ENCODE measurements at regions of chr3 and their contacts with region 1.

Region 1: GRCh38 chr3:58630076-58630709 is 36.4 kb downstream of the FAM3D start:
- DNase-seq: peak; percentile 81
- H3K4me3 Mint-ChIP-seq: no peak overlapping the region
- H3K27ac Mint-ChIP-seq: no peak overlapping the region
- H3K4me1 Mint-ChIP-seq: no peaks in the 10 kb centered on the region
- H3K27me3 Mint-ChIP-seq: no peaks in the 10 kb centered on the region

Region 2: DNA sequence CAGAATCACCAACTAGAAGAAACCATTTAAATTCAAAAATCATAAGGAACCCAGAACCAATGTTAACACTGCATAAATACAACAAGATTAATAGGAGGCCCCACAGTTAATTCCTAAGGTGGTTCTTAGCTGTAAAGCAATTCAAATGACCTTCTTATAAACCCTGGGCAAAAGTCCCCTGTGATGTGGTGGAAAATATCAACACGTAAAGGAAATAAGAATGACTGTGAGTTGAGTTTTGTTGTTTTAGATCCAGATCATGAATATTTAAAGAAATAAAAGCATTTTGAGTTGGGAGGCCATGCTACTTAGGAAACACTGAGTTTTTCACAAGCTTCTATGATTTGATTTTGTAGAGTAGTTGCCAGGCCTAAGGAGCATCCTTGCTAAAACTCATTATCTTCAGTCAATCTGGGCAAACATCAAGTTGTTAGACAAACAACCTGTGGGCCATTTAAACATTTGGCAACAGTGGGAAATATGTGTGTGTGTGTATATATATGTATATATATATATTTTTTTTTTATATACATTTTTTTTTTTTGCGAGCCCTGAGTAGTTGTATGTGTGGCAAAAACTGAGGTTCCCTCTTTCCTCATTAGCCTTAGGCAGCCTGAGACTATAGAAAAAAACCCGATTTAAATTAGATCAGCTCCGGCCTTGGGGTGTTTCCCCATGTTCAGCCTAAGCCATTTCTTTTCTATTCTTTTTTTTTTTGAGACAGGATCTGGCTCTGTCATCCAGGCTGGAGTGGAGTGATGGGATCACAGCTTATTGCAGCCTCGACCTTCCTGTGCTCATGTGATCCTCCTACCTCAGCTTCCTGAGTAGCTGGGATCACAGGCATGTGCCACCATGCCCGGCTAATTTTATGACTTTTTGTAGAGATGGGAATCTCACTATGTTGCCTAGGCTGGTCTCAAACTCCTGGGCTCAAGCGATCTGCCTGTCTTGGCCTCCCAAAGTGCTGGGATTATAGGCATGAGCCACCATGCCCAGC is 305.5 kb before region 1 on chr3:
- CTCF ChIA-PET with region 1: no interaction called
- intact Hi-C with region 1: loop called (anchors 1 kb)
- DNase-seq: peak; percentile 21
- H3K4me3 Mint-ChIP-seq: peak overlapping the region; percentile 16
- H3K27ac Mint-ChIP-seq: peak overlapping the region; percentile 89
- H3K4me1 Mint-ChIP-seq: peaks cover 42% of the 10 kb centered on the region
- H3K27me3 Mint-ChIP-seq: no peaks in the 10 kb centered on the region

Region 3: DNA sequence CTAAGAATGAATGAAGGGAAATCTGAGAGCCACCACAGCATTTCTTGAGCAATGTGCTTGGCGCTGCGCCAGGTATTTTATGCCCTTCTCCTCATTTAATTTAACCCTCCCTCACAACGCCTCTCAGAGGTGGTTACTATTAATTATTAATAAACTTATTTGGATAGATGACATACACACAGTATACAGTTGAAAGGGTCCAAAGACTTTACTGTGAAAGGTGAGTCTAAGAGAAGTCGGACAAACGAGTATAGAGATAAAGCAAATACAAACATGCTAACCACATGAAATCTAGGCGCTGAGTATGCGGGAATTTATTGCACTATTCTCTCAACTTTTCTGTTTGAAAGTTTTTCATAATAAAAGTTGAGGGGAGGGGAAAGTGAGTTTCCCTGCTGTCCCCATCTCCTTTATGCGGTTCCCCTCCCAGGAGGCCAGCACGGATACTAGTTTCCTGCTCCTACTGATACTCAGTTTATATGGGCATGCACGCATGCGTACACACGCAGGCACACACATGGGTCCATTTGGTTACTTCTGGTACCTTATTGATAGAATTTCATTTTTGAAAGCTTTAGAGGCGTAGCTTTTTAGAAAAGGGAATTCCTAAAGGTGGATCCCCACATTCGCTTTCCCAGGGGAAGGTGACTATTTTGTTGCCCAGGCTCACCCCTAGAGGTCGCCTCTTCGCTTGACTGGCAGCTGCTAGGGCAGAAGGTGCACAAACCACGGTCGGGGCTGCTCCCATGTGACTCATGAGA is 166.8 kb before region 1 on chr3:
- CTCF ChIA-PET with region 1: no interaction called
- intact Hi-C with region 1: loop called (anchors 1 kb)
- DNase-seq: peak; percentile 92
- H3K4me3 Mint-ChIP-seq: peak overlapping the region; percentile 16
- H3K27ac Mint-ChIP-seq: peak overlapping the region; percentile 61
- H3K4me1 Mint-ChIP-seq: peaks cover 15% of the 10 kb centered on the region
- H3K27me3 Mint-ChIP-seq: peaks cover 3% of the 10 kb centered on the region

Region 4: GRCh38 chr3:58607816-58608215 is 22.4 kb before region 1 on chr3:
- CTCF ChIA-PET with region 1: interaction called, 15 read pairs
- intact Hi-C with region 1: no loop called
- DNase-seq: no peak
- H3K4me3 Mint-ChIP-seq: no peak overlapping the region
- H3K27ac Mint-ChIP-seq: no peak overlapping the region
- H3K4me1 Mint-ChIP-seq: no peaks in the 10 kb centered on the region
- H3K27me3 Mint-ChIP-seq: peaks cover 6% of the 10 kb centered on the region

Region 5: GRCh38 chr3:58640700-58641372 is 10.6 kb after region 1 on chr3:
- CTCF ChIA-PET with region 1: interaction called, 12 read pairs
- intact Hi-C with region 1: no loop called
- DNase-seq: peak; percentile 76
- H3K4me3 Mint-ChIP-seq: no peak overlapping the region
- H3K27ac Mint-ChIP-seq: no peak overlapping the region
- H3K4me1 Mint-ChIP-seq: no peaks in the 10 kb centered on the region
- H3K27me3 Mint-ChIP-seq: peaks cover 2% of the 10 kb centered on the region

Measured in activated naive CD4-positive, alpha-beta T cell treated with anti-CD3 and anti-CD28 coated beads for 36 hours (primary cell).